Astrocyte of the cerebellum (primary cell): ENCODE measurements at regions of chr2 and their contacts with region 1.

Region 1: GRCh38 chr2:234571620-234572407 is 74.9 kb upstream of the ARL4C start:
- DNase-seq: no peak
- H3K4me3 ChIP-seq: no peak overlapping the region
- CTCF ChIP-seq: no peak

Region 2: GRCh38 chr2:234102112-234102511 is 469.7 kb before region 1 on chr2:
- in situ Hi-C with region 1: no loop called
- DNase-seq: no peak
- H3K4me3 ChIP-seq: no peak overlapping the region
- CTCF ChIP-seq: no peak

Region 3: GRCh38 chr2:234655706-234656105 is 83.9 kb after region 1 on chr2:
- in situ Hi-C with region 1: loop called (anchors 5 kb)
- DNase-seq: no peak
- H3K4me3 ChIP-seq: no peak overlapping the region
- CTCF ChIP-seq: no peak

Region 4: GRCh38 chr2:234792621-234793022 is 220.8 kb after region 1 on chr2:
- in situ Hi-C with region 1: no loop called
- DNase-seq: peak; percentile 92
- H3K4me3 ChIP-seq: no peak overlapping the region
- CTCF ChIP-seq: no peak